ENCODE measurements at regions of chr9 and their contacts with region 1.

Region 1: DNA sequence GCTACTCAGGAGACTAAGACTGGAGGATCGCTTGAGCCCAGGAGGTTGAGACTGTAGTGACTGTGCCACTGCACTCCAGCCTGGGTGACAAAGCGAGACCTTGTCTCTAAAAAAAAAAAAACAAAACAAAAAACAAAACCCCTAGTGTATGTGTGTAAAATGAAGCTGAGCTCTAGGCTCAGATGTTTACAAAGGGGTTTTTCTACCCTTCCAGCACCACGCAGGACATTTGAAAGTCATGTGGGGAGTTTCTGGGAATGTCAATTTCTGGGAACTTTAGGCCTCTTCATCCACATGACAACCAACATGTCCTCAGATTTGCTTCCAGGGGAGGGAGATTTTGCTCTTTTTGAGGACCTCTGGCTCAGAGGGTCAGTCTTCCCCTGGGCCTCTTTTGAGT is 42.4 kb upstream of the AIF1L start:
- DNase-seq: no peak
- H3K4me3 Mint-ChIP-seq: no peak overlapping the region
- H3K27ac Mint-ChIP-seq: no peak overlapping the region
- H3K4me1 Mint-ChIP-seq: no peaks in the 10 kb centered on the region
- H3K27me3 Mint-ChIP-seq: no peaks in the 10 kb centered on the region

Region 2: GRCh38 chr9:131037335-131038255 is 16.3 kb before region 1 on chr9:
- intact Hi-C with region 1: no loop called
- DNase-seq: no peak
- H3K4me3 Mint-ChIP-seq: no peak overlapping the region
- H3K27ac Mint-ChIP-seq: no peak overlapping the region
- H3K4me1 Mint-ChIP-seq: no peaks in the 10 kb centered on the region
- H3K27me3 Mint-ChIP-seq: peaks cover 2% of the 10 kb centered on the region

Region 3: DNA sequence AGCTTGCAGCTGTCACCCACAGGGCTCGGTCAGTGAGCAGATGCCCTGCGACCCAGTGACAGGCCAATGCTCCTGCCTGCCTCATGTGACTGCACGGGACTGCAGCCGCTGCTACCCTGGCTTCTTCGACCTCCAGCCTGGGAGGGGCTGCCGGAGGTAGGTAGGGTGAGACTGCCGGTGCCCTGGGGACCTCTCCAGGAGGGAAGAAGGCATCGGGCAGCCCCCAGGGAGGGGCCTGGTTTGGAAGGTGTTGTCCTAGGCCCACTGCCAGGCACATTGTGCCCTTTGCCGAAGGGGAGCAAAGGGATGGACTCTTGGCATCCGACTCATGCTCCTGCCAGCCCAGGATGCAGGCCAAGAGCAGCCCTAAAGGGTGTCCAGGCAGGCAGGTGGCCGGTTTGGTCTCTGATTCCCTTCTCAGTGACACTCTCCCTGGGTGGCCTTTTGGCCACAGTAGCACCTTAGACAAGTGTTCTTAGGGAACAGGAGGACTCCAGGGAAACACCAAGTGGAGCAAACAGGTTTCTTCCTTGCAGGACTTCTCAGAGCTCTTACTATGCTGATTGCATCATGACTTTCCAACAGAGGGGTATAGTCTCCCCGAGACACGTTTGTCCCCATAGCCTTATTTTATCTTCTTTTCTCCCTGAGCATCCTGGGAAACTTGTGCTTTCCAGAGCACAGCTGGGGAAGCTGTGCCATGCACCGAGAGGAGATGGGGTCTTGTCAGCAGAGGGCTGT is 14.3 kb after region 1 on chr9:
- intact Hi-C with region 1: no loop called
- DNase-seq: no peak
- H3K4me3 Mint-ChIP-seq: no peak overlapping the region
- H3K27ac Mint-ChIP-seq: no peak overlapping the region
- H3K4me1 Mint-ChIP-seq: no peaks in the 10 kb centered on the region
- H3K27me3 Mint-ChIP-seq: no peaks in the 10 kb centered on the region

Region 4: DNA sequence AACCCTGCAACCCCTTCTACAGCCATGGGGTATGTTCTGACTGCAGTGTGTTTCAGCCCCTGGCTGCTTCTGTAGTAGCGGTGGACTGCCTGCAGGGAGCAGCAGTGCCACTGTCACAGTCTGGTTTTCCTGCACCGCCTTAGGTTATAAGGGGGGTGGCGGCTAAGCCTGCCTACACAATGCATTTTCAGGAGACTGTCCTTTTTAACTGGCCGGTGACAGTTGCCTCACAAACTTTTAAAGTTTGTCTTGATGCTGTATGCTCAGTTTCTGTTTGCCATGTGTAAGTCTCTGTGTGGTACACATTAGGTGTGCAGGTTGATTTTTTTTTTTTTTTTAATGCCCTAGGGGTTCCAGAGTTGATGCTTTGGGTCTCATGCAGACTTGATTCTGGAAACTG is 124.5 kb after region 1 on chr9:
- intact Hi-C with region 1: loop called (anchors 5 kb)
- DNase-seq: peak; percentile 72
- H3K4me3 Mint-ChIP-seq: no peak overlapping the region
- H3K27ac Mint-ChIP-seq: no peak overlapping the region
- H3K4me1 Mint-ChIP-seq: peaks cover 16% of the 10 kb centered on the region
- H3K27me3 Mint-ChIP-seq: no peaks in the 10 kb centered on the region

Region 5: DNA sequence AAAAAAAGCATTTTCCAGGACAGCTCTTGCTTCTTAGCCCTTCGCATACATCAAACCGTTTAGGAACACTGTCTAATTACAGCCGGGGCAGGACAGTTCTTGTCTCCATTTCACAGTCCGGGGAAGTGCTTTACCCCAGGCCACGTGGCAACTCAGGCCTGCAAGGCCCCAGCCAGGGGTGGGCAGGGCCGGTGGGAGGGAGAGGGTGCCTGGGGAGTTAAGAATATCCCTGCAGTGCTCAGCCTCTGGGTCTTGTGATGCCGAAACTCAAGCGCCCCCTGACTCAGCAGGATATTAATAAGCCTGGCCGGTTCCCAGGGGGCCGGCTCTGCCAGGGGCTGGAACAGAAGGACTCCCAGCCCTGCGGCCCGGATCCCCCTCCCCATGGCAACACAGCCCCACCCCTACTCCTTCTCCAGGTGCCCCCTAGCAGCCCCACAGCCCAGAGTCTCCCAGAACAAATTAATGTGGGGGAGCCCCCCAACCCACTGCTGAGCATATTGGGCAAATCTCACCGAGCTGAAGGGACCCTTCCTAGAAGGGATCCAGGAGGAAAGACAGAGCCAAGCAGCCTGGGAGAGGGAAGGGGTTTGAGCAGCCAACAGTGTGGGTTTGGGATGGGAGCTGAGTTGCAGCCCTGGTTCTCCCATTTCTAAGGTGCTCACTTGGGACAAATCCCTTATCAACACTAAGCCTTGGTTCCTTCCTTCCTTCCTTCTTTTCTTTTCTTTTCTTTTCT is 280.9 kb after region 1 on chr9:
- intact Hi-C with region 1: loop called (anchors 1 kb)
- DNase-seq: no peak
- H3K4me3 Mint-ChIP-seq: no peak overlapping the region
- H3K27ac Mint-ChIP-seq: no peak overlapping the region
- H3K4me1 Mint-ChIP-seq: peaks cover 4% of the 10 kb centered on the region
- H3K27me3 Mint-ChIP-seq: peaks cover 2% of the 10 kb centered on the region

Region 6: DNA sequence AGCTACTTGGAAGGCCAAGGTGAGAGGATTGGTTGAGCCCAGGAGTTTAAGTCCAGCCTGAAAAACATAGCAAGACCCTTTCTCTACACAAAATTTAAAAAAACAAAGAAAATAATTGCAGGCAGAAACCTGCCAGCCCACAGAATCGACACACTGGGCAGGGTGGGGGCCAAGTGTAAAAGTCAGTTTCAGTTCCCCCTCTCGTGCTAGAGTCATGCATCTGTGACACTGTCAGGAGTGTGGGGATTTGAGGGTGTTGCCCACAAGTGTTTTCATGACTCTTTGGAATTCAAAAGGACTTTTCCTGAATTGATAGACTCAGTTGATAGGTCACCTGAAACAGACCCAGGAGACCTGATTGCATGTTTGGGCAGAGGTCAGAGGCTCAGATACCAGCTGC is 387.5 kb after region 1 on chr9:
- intact Hi-C with region 1: no loop called
- DNase-seq: no peak
- H3K4me3 Mint-ChIP-seq: no peak overlapping the region
- H3K27ac Mint-ChIP-seq: no peak overlapping the region
- H3K4me1 Mint-ChIP-seq: peaks cover 34% of the 10 kb centered on the region
- H3K27me3 Mint-ChIP-seq: no peaks in the 10 kb centered on the region

Measured in activated T-helper 1 cell treated with anti-CD3 and anti-CD28 coated beads, Interleukin-12 subunit alpha, Interleukin-12 subunit beta, Interleukin-2, Interleukin-4 antibody, amounts not matched to agents 30 ng/mL and 10 ng/mL and 1 ng/mL, durations not matched to agents 14 hours and 24 hours and 36 hours (primary cell).